Naive thymus-derived CD4-positive, alpha-beta T cell (primary cell): ENCODE measurements at regions of chr7 and their contacts with region 1.

Region 1: GRCh38 chr7:23181684-23182553 is at the start of gene NUP42:
- DNase-seq: peak; percentile 87 to 95 (median 93)
- ATAC-seq: peak; percentile 97
- H3K4me3 ChIP-seq: peak within 1 kb of the TSS; percentile 86
- H3K4me3 Mint-ChIP-seq: peak within 1 kb of the TSS; percentile 95 to 100 (median 98)
- H3K27ac ChIP-seq: peak within 1 kb of the TSS; percentile 85
- H3K27ac Mint-ChIP-seq: peak within 1 kb of the TSS; percentile 97 to 99 (median 98)
- H3K4me1 ChIP-seq: peaks cover 16 to 17% of the 10 kb centered on the region in 2 donors
- H3K4me1 Mint-ChIP-seq: peaks cover 20 to 50% (median 43%) of the 10 kb centered on the region in 7 donors
- H3K27me3 ChIP-seq: no peaks in the 10 kb centered on the region
- H3K27me3 Mint-ChIP-seq: peaks cover 0 to 16% (median 0%) of the 10 kb centered on the region in 5 donors
- total RNA-seq, gene NUP42: 19.8 to 37.7 (median 27.5) TPM

Region 2: GRCh38 chr7:22822486-22823141 is 359.3 kb before region 1 on chr7 and contains the start of gene TOMM7:
- CTCF ChIA-PET with region 1: no interaction called
- POLR2A ChIA-PET with region 1: no interaction called
- intact Hi-C with region 1: loop called (anchors 1 to 2 kb)
- DNase-seq: peak; percentile 68 to 92 (median 90)
- ATAC-seq: peak; percentile 99
- H3K4me3 ChIP-seq: peak within 1 kb of the TSS; percentile 83
- H3K4me3 Mint-ChIP-seq: peak within 1 kb of the TSS; percentile 93 to 100 (median 99)
- H3K27ac ChIP-seq: peak within 1 kb of the TSS; percentile 94
- H3K27ac Mint-ChIP-seq: peak within 1 kb of the TSS; percentile 94 to 100 (median 99)
- H3K4me1 ChIP-seq: peaks cover 6 to 19% of the 10 kb centered on the region in 2 donors
- H3K4me1 Mint-ChIP-seq: peaks cover 15 to 53% (median 43%) of the 10 kb centered on the region in 7 donors
- H3K27me3 ChIP-seq: peaks cover 0 to 4% of the 10 kb centered on the region in 2 donors
- H3K27me3 Mint-ChIP-seq: peaks cover 15 to 36% (median 19%) of the 10 kb centered on the region in 5 donors
- total RNA-seq, gene TOMM7: 302 to 737 (median 649) TPM

Region 3: GRCh38 chr7:23105644-23106056 is 76.3 kb before region 1 on chr7 and contains the start of gene KLHL7:
- CTCF ChIA-PET with region 1: interaction called, 3 read pairs
- POLR2A ChIA-PET with region 1: interaction called, 25 read pairs
- intact Hi-C with region 1: loop called (anchors 1 kb)
- DNase-seq: peak; percentile 90 to 95 (median 93)
- ATAC-seq: peak; percentile 99
- H3K4me3 ChIP-seq: peak within 1 kb of the TSS; percentile 93
- H3K4me3 Mint-ChIP-seq: peak within 1 kb of the TSS; percentile 90 to 99 (median 96)
- H3K27ac ChIP-seq: peak within 1 kb of the TSS; percentile 90
- H3K27ac Mint-ChIP-seq: peak within 1 kb of the TSS; percentile 91 to 97 (median 96)
- H3K4me1 ChIP-seq: peaks cover 4 to 18% of the 10 kb centered on the region in 2 donors
- H3K4me1 Mint-ChIP-seq: peaks cover 33 to 51% (median 47%) of the 10 kb centered on the region in 7 donors
- H3K27me3 ChIP-seq: no peaks in the 10 kb centered on the region
- H3K27me3 Mint-ChIP-seq: no peaks in the 10 kb centered on the region
- total RNA-seq, gene KLHL7: 16.9 to 22.9 (median 22.7) TPM

Region 4: GRCh38 chr7:23117841-23118240 is 64.1 kb before region 1 on chr7:
- CTCF ChIA-PET with region 1: no interaction called
- POLR2A ChIA-PET with region 1: no interaction called
- intact Hi-C with region 1: no loop called
- DNase-seq: no peak
- ATAC-seq: no peak
- H3K4me3 ChIP-seq: no peak overlapping the region
- H3K4me3 Mint-ChIP-seq: no peak overlapping the region
- H3K27ac ChIP-seq: no peak overlapping the region
- H3K27ac Mint-ChIP-seq: no peak overlapping the region
- H3K4me1 ChIP-seq: no peaks in the 10 kb centered on the region
- H3K4me1 Mint-ChIP-seq: peaks cover 3 to 45% (median 28%) of the 10 kb centered on the region in 7 donors
- H3K27me3 ChIP-seq: no peaks in the 10 kb centered on the region
- H3K27me3 Mint-ChIP-seq: no peaks in the 10 kb centered on the region

Region 5: GRCh38 chr7:23347682-23348180 is 165.8 kb after region 1 on chr7:
- CTCF ChIA-PET with region 1: no interaction called
- POLR2A ChIA-PET with region 1: no interaction called
- intact Hi-C with region 1: loop called in 1 of 2 experiments (anchors 5 kb)
- DNase-seq: no peak
- ATAC-seq: peak; percentile 66
- H3K4me3 ChIP-seq: no peak overlapping the region
- H3K4me3 Mint-ChIP-seq: peak overlapping the region in 7 of 10 donors; percentile 63 to 87 (median 83)
- H3K27ac ChIP-seq: no peak overlapping the region
- H3K27ac Mint-ChIP-seq: peak overlapping the region in 6 of 9 donors; percentile 57 to 94 (median 80)
- H3K4me1 ChIP-seq: peaks cover 6 to 11% of the 10 kb centered on the region in 2 donors
- H3K4me1 Mint-ChIP-seq: peaks cover 9 to 36% (median 24%) of the 10 kb centered on the region in 7 donors
- H3K27me3 ChIP-seq: no peaks in the 10 kb centered on the region
- H3K27me3 Mint-ChIP-seq: peaks cover 0 to 39% (median 0%) of the 10 kb centered on the region in 5 donors

Region 6: DNA sequence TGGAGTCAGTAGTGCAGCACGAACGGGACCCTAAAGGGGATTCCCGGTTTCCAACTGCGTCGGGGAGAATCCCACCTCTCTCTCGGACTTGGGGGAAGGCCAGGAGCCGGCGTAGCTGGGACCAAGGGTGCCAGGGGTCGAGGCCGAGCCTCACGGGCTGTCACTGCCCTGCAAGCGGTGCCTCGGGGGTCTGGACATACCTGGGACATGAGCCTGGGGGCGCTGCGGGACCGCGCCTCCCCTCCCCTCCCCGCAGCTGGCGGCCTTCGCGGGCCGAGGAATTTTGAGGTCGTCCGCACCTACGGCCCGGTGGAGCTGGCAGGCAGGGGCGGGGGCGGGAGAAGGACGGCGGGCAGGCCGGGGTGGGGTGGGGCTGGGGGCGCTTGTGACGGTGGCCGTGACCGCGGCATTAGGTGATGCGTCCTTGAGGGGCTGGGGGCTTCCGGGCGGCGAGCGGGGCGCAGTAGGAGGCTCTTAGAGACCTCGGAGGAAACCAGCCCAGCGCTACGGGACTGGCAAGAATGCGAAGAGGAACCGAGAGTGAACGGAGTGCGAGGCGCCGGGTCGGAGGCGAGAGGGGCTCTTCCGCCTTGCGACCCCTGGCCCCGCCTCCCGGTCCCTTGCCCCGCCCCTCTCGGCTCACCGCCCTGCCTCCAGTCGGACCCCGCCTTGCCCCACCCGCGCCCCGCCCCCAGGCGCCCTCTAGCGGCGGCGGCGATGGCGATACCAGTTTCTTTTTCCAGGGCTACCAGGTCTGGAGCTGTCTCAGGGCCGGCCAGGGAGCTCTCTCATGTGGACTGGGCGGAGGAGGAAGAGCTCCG is 1998.1 kb after region 1 on chr7:
- CTCF ChIA-PET with region 1: no interaction called
- POLR2A ChIA-PET with region 1: no interaction called
- intact Hi-C with region 1: loop called in 1 of 2 experiments (anchors 1 kb)
- DNase-seq: peak; percentile 88 to 99 (median 94)
- ATAC-seq: peak; percentile 99
- H3K4me3 ChIP-seq: peak overlapping the region; percentile 75
- H3K4me3 Mint-ChIP-seq: peak overlapping the region; percentile 82 to 93 (median 88)
- H3K27ac ChIP-seq: peak overlapping the region; percentile 86
- H3K27ac Mint-ChIP-seq: peak overlapping the region; percentile 83 to 96 (median 92)
- H3K4me1 ChIP-seq: peaks cover 6 to 7% of the 10 kb centered on the region in 2 donors
- H3K4me1 Mint-ChIP-seq: peaks cover 13 to 31% (median 22%) of the 10 kb centered on the region in 7 donors
- H3K27me3 ChIP-seq: no peaks in the 10 kb centered on the region
- H3K27me3 Mint-ChIP-seq: peaks cover 0 to 12% (median 0%) of the 10 kb centered on the region in 5 donors